ENCODE measurements at regions of chr18 and their contacts with region 1.

Region 1: DNA sequence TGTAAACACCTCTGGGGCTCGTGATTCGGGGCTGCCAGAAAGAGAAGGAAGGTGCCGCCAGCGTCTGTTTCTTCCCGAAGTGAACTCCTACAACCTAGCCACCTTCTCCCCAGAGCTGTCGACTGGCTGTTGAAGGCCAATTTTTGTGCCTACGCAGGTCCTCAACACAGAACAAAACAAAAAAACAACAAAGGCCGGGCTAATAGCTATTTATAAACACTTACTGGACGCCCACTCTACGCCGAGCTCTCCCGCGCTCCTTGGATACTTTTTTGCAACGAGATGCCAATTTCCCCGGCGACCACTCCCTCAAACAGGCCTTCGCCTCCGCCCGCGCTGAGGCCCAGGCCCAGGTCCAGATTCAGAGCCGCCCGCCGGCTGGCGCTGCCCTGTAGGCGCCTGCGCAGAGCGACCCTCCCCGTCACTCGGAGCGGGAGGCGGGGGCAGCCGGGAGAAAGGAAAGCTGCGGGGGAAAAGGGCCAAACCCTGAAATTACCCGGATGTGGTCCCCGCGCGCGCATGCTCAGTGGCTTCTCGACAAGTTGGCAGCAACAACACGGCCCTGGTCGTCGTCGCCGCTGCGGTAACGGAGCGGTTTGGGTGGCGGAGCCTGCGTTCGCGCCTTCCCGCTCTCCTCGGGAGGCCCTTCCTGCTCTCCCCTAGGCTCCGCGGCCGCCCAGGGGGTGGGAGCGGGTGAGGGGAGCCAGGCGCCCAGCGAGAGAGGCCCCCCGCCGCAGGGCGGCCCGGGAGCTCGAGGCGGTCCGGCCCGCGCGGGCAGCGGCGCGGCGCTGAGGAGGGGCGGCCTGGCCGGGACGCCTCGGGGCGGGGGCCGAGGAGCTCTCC is at the start of gene SMAD4:
- DNase-seq: peak; percentile 97 to 99
- H3K4me3 ChIP-seq: peak within 1 kb of the TSS; percentile 63 to 89 (median 77)
- H3K27ac ChIP-seq: peak within 1 kb of the TSS; percentile 92 to 100 (median 99)
- H3K4me1 ChIP-seq: peaks cover 33 to 73% (median 54%) of the 10 kb centered on the region in 4 donors
- H3K27me3 ChIP-seq: no peaks in the 10 kb centered on the region
- CTCF ChIP-seq: no peak
- EP300 ChIP-seq: no peak
- POLR2A ChIP-seq: peak in 2 of 4 donors; percentile 68 to 82
- total RNA-seq, gene SMAD4: 42.0 to 184 (median 121) TPM

Region 2: GRCh38 chr18:50819728-50820378 is 210.1 kb before region 1 on chr18 and contains the start of gene MRO:
- intact Hi-C with region 1: loop called (anchors 10 kb)
- DNase-seq: peak; percentile 88 to 94
- H3K4me3 ChIP-seq: peak within 1 kb of the TSS; percentile 30 to 51 (median 40)
- H3K27ac ChIP-seq: peak within 1 kb of the TSS in 4 of 5 donors; percentile 1 to 55 (median 48)
- H3K4me1 ChIP-seq: peaks cover 21 to 32% (median 24%) of the 10 kb centered on the region in 4 donors
- H3K27me3 ChIP-seq: no peaks in the 10 kb centered on the region
- CTCF ChIP-seq: peak in 5 of 7 experiments; percentile 80 to 89 (median 86)
- EP300 ChIP-seq: peak; percentile 64
- POLR2A ChIP-seq: no peak
- total RNA-seq, gene MRO: 0.45 to 2.0 (median 1.3) TPM in 3 of 5 donors, not detected in the others

Region 3: DNA sequence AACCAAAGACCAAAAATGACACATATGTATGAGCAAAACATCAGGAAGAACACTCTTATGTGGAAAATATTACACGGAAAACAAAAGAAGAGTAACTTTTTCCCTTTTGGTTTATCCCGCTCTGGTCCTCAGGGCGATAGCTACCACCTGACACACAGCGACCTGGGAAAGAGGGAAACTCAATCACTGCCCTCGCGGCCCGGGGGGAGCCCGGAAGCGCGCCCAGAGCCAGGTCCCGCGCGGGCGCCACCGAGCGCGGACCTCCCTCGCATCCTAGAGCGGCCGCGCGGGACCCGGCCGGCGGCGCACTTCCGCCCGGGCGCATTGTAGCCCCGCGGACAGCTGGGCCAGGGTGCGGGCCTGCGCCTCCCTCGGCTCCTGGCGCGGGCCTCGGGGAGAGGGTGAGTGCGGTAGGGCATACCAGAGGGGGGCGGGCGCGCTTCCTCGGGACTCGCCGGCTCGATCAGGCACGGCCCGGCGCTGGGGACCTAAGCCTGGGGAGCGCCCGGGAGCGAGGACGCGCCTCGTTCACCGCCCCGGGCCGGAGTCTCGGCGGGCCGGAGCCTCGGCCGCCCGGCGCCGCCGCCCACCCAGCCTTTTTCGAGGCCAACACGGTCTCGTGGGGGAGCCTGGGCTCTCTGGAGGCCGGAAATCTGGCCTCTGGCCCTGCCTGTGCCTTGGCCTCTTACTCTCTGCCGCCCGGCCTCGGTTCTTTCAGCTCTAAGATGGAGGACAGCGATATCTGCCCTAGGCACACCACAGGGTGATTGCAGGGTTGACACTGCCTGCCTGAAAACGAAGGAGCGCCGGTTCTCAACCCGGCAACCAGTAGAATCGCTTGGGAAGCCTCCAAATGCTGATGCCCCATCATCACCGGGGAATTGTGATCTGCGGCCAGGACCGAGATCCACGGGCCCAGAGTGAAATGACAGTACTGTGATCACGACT is 61.9 kb before region 1 on chr18 and contains the start of gene ELAC1:
- intact Hi-C with region 1: loop called (anchors 10 kb)
- DNase-seq: peak; percentile 83 to 94
- H3K4me3 ChIP-seq: peak within 1 kb of the TSS; percentile 73 to 92 (median 85)
- H3K27ac ChIP-seq: peak within 1 kb of the TSS; percentile 98 to 100 (median 99)
- H3K4me1 ChIP-seq: peaks cover 18 to 34% (median 25%) of the 10 kb centered on the region in 4 donors
- H3K27me3 ChIP-seq: no peaks in the 10 kb centered on the region
- CTCF ChIP-seq: peak in 1 of 7 experiments; percentile 8
- EP300 ChIP-seq: no peak
- POLR2A ChIP-seq: peak in 1 of 4 donors; percentile 71
- total RNA-seq, gene ELAC1: 0.87 to 22.8 (median 3.9) TPM

Region 4: GRCh38 chr18:51137051-51137729 is 107.3 kb after region 1 on chr18:
- intact Hi-C with region 1: no loop called
- DNase-seq: no peak
- H3K4me3 ChIP-seq: no peak overlapping the region
- H3K27ac ChIP-seq: no peak overlapping the region
- H3K4me1 ChIP-seq: no peaks in the 10 kb centered on the region
- H3K27me3 ChIP-seq: no peaks in the 10 kb centered on the region
- CTCF ChIP-seq: no peak
- EP300 ChIP-seq: no peak
- POLR2A ChIP-seq: no peak